PC-3 (cell line): ENCODE measurements at regions of chr19 and their contacts with region 1.

Region 1: DNA sequence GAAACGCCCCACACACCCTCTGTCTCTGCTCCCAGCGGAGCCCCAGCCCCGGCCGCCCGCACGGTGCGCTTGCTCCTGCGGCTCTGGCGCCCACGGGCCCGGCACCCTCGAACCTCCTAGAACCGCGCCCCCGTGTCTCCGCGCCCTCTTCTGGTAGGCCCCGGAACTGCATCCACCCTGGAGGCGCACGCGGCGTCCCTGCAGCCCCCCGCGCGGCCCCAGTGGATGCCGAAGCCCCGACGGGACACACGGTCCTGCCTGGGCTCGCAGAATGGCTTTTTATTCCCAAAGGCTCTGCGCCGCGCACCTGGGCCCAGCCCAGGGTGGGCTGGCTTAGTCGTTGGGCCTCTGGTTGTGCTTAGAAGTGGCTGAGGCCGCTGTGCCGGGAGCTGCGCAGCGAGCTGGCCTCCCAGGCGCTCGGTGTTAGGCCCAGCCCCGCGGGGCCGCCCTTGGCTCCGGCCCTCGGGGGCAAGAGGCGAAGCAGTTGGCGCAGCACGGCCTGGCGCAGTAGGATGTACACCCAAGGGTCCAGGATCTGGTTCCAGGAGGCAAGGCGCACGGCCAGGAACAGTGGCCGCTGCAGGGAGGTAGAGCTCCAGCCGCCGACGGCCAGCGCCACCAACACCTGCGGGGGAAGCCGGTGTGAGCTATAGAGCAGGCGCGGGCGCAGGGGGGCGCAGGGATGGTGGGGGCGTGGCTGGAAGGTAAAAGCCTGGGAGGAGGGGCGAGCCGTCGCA is 2.8 kb downstream of the PTGER1 start:
- DNase-seq: peak; percentile 72
- ATAC-seq: peak; percentile 7; the same call in 1 of the 2 replicates
- H3K4me3 ChIP-seq: peak overlapping the region; percentile 50
- H3K27ac ChIP-seq: no peak overlapping the region
- H3K4me1 ChIP-seq: peaks cover 29% of the 10 kb centered on the region
- H3K27me3 ChIP-seq: no peaks in the 10 kb centered on the region
- CTCF ChIP-seq: peak; percentile 96

Region 2: GRCh38 chr19:14505488-14506432 is 33.4 kb after region 1 on chr19:
- CTCF ChIA-PET with region 1: interaction called, 3 read pairs
- POLR2A ChIA-PET with region 1: no interaction called
- intact Hi-C with region 1: loop called (anchors 1 kb)
- DNase-seq: peak; percentile 99
- ATAC-seq: peak; percentile 83
- H3K4me3 ChIP-seq: peak overlapping the region; percentile 41
- H3K27ac ChIP-seq: peak overlapping the region; percentile 96
- H3K4me1 ChIP-seq: peaks cover 74% of the 10 kb centered on the region
- H3K27me3 ChIP-seq: no peaks in the 10 kb centered on the region
- CTCF ChIP-seq: peak; percentile 93

Region 3: GRCh38 chr19:14512411-14512961 is 40.1 kb after region 1 on chr19:
- CTCF ChIA-PET with region 1: interaction called, 4 read pairs
- POLR2A ChIA-PET with region 1: interaction called, 15 read pairs
- intact Hi-C with region 1: no loop called
- DNase-seq: no peak
- ATAC-seq: no peak
- H3K4me3 ChIP-seq: no peak overlapping the region
- H3K27ac ChIP-seq: no peak overlapping the region
- H3K4me1 ChIP-seq: peaks cover 57% of the 10 kb centered on the region
- H3K27me3 ChIP-seq: no peaks in the 10 kb centered on the region
- CTCF ChIP-seq: no peak